Activated naive CD8-positive, alpha-beta T cell treated with anti-CD3 and anti-CD28 coated beads, Interleukin-2, amount 10 ng/mL, durations not matched to agents 7 days and 5 days (primary cell): ENCODE measurements at regions of chr11 and their contacts with region 1.

Region 1: DNA sequence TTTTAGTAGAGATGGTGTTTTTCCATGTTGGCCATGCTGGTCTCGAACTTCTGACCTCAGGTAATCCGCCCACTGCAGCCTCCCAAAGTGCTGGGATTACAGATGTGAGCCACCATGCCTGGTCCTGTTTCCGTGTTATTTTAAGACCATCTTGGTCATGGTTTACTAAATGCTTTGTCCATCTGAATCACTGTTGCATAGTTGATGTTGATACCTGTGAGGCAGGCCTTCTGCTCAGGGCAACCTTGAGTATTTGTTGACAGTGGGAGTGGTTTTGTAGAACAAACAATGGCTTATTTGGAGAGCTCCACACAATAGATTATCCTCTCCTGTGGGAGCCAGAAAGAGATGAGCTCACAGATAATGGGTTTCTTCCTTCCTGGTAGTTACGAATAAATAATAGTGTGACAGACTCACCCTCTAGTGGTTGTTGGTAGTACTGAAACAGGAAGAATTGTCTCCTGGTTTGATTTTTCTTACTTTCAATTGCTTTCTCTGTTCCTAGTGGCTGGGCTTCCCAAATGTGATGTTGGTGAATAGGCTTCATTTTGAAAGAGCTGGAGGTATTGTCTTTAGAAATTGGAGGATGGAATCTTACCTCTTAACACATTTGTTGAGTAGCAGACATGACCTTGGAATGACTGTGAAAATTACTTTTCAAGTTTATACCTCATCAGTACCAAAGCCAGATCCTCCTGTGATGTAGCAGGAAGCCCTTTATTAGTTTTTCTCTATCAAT is 39.0 kb downstream of the CTNND1 start:
- DNase-seq: no peak
- ATAC-seq: peak; percentile 81
- H3K4me3 Mint-ChIP-seq: peak overlapping the region; percentile 55
- H3K27ac Mint-ChIP-seq: peak overlapping the region; percentile 79
- H3K4me1 Mint-ChIP-seq: peaks cover 25% of the 10 kb centered on the region
- H3K27me3 Mint-ChIP-seq: no peaks in the 10 kb centered on the region

Region 2: GRCh38 chr11:57751676-57752253 is 48.8 kb before region 1 on chr11 and contains the start of gene BTBD18:
- POLR2A ChIA-PET with region 1: interaction called, 10 read pairs
- DNase-seq: no peak
- ATAC-seq: peak; percentile 47
- H3K4me3 Mint-ChIP-seq: no peak within 1 kb of the TSS
- H3K27ac Mint-ChIP-seq: peak within 1 kb of the TSS; percentile 65
- H3K4me1 Mint-ChIP-seq: peaks cover 8% of the 10 kb centered on the region
- H3K27me3 Mint-ChIP-seq: no peaks in the 10 kb centered on the region
- total RNA-seq, gene BTBD18: not detected